ENCODE measurements at regions of chr16 and their contacts with region 1.

Region 1: DNA sequence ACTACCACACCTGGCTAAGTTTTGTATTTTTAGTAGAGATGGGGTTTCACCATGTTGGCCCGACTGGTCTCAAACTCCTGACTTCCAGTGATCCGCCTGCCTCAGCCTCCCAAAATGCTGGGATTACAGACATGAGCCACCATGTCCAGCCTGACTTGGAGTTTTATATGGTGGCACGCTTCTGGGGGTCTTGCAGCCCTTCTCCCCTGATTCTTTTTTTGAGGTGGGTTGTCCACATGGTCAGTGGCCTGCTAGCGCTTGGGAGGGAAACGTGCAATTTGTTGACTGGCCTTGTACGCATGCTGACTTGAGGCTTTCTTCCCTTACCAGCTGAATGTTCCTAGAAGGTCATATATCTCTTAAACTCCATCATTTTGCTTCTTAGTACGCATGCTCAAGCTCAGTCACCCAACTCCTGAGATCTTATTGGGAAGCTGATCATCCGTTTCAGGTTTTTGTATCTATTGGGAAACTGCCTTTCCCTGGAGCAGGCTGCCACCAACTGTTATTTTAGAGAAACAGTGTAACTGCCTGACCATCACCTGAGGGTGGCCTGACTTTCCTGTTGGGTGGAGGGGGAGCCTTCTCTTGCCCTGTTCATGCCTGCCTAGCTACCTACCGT is 13.7 kb upstream of the LDHD start:
- DNase-seq: peak; percentile 56 to 61
- H3K4me3 ChIP-seq: no peak overlapping the region
- H3K4me3 Mint-ChIP-seq: peak overlapping the region; percentile 4
- H3K27ac Mint-ChIP-seq: peak overlapping the region; percentile 61
- H3K4me1 ChIP-seq: peaks cover 45% of the 10 kb centered on the region
- H3K4me1 Mint-ChIP-seq: peaks cover 26% of the 10 kb centered on the region
- H3K27me3 ChIP-seq: no peaks in the 10 kb centered on the region
- H3K27me3 Mint-ChIP-seq: no peaks in the 10 kb centered on the region
- CTCF ChIP-seq: peak in 1 of 2 experiments; percentile 20

Region 2: DNA sequence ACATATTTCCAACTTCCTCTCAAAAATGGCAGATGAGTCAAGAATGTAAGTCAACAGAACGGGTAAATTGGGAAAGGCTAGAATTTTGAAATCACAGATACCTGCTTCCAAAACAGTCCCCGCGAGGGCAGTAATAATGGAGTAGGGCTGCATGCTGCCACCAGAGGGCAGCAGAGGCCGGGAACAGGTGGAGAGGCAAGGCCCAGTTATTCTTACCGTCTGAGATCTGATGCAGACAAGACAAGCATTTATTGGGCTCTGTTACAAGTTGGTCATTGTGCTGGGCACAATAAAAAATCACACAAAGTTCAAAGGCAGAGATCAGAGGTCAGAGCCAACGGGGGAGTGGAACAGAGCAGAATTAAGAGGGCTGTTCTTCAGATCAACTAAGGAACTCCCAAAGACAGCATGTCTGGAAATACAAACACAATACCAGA is 420.8 kb before region 1 on chr16:
- CTCF ChIA-PET with region 1: interaction called, 3 read pairs
- POLR2A ChIA-PET with region 1: no interaction called
- intact Hi-C with region 1: loop called (anchors 1 kb)
- DNase-seq: peak; percentile 83 to 92
- H3K4me3 ChIP-seq: no peak overlapping the region
- H3K4me3 Mint-ChIP-seq: no peak overlapping the region
- H3K27ac Mint-ChIP-seq: no peak overlapping the region
- H3K4me1 ChIP-seq: no peaks in the 10 kb centered on the region
- H3K4me1 Mint-ChIP-seq: peaks cover 6% of the 10 kb centered on the region
- H3K27me3 ChIP-seq: no peaks in the 10 kb centered on the region
- H3K27me3 Mint-ChIP-seq: peaks cover 2% of the 10 kb centered on the region
- CTCF ChIP-seq: peak; percentile 95 to 99

Region 3: DNA sequence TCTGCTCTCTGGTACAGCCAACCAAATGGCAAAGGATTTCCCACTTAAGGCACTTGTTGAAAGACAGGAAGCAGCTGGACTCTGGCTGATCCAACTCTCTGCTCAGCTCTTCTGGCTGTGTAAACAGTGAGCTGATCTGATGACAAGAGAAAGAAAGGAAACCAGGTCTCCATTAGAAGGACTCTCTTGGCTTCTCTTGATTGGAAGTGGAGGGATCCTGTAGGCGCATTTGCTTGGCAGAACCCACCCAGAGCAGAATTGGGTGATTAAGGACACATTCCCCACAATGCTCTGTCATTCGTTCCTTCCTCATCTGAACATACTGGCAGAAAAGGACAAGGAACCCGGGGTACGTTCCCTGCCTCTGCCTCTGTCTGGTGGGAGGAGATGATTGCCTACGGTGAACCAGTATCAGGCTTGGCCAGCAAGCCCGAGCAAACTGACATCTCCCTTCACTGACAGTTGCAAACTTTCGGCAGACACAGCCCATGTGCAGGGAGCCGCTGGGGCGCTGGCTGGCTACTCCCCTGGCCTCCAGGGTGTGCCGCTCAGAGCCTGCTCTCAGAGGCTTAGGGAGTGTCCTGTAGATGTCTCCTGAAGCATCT is 42.8 kb before region 1 on chr16:
- CTCF ChIA-PET with region 1: no interaction called
- POLR2A ChIA-PET with region 1: no interaction called
- intact Hi-C with region 1: no loop called
- DNase-seq: no peak
- H3K4me3 ChIP-seq: no peak overlapping the region
- H3K4me3 Mint-ChIP-seq: no peak overlapping the region
- H3K27ac Mint-ChIP-seq: no peak overlapping the region
- H3K4me1 ChIP-seq: peaks cover 38% of the 10 kb centered on the region
- H3K4me1 Mint-ChIP-seq: peaks cover 30% of the 10 kb centered on the region
- H3K27me3 ChIP-seq: no peaks in the 10 kb centered on the region
- H3K27me3 Mint-ChIP-seq: no peaks in the 10 kb centered on the region
- CTCF ChIP-seq: no peak

Region 4: DNA sequence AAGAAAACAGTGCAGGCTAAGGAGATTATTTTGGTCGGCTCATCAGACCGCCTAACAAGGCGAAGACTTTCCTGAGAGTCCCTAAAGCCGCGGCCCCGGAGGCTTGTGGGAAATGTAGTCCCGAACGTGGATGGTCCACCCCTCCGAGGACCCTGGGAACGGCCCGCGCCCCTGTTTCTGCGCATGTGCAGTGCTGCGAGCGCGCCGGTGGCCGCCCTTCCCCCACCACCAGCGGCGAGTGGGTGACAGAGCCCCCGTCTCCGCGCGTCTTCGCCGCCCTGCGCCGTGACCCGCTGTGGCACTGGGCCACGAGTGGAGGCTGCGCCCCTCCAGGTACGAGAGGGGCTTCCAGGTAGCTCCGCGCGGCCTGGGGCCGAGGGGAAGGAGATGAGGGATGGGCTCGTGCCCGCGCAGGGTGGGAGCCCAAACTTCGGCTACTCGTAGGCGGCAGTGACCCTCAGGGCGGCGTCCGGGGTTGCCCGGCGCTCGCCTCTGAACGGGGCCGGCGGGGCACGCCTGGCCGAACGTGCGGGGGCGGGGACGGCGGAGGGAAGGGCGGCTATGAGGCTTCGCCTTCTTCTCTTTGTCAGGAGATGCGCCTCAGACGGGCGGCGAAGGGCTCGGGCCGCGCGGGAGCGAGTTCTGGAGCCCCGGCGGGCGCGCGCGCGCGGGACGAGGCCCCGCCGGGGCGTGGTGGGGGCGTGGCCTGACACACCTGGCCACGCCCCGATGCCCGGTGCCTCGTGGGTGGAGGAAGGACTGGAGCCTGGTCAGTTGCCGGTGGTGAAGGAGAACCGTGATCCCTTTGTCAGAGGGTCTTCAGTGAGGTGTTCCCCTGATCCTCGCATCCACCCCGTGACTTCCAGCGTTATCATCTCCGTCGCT is 18.3 kb after region 1 on chr16 and contains the start of gene ZFP1:
- CTCF ChIA-PET with region 1: no interaction called
- POLR2A ChIA-PET with region 1: no interaction called
- intact Hi-C with region 1: loop called (anchors 1 kb)
- DNase-seq: peak; percentile 97 to 98
- H3K4me3 ChIP-seq: peak within 1 kb of the TSS; percentile 77
- H3K4me3 Mint-ChIP-seq: peak within 1 kb of the TSS; percentile 87
- H3K27ac Mint-ChIP-seq: peak within 1 kb of the TSS; percentile 78
- H3K4me1 ChIP-seq: no peaks in the 10 kb centered on the region
- H3K4me1 Mint-ChIP-seq: no peaks in the 10 kb centered on the region
- H3K27me3 ChIP-seq: no peaks in the 10 kb centered on the region
- H3K27me3 Mint-ChIP-seq: no peaks in the 10 kb centered on the region
- CTCF ChIP-seq: no peak
- total RNA-seq, gene ZFP1: 11.4 and 14.2 TPM in 2 replicates